Activated CD4-positive, alpha-beta T cell treated with anti-CD3 and anti-CD28 coated beads for 36 hours (primary cell): ENCODE measurements at regions of chr1 and their contacts with region 1.

Region 1: DNA sequence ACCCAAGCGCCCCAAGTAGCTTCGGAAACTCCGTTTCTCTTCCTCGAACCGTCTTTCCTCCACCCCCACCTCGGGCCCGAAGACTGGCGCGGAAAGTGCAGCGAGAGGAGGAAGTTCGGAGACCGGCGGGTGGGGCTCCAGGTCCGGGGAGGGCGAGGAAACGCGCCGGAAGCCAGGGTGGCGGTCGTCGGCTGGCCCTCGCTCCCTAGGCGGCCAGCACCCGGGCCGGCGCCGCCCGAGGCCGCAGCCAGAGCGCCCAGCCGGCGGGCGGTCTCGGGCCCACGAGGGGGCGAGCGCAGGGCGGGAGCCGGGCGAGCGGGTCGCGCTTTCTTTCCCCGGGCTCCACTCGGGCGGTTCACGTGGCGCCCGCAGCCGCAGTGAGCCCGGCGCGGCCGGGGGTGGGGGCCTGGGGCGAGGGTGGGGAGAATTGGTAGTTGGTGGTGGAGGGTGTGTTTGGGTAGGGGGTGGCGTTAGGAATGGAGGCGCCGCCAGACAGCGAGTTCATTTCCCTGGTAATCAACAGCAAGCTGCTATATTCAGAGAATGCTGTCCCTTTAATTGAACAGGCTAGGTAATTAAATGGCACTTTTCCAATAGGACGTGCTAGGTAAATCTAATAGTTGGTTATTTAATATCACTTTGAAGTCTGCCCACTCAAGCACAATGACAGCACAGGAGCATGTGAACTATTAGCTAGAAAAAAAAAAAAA is 6.7 kb downstream of the LMO4 start:
- DNase-seq: peak; percentile 77
- ATAC-seq: peak; percentile 53
- H3K4me3 Mint-ChIP-seq: peak overlapping the region; percentile 76
- H3K27ac Mint-ChIP-seq: peak overlapping the region; percentile 96
- H3K4me1 Mint-ChIP-seq: peaks cover 60% of the 10 kb centered on the region
- H3K27me3 Mint-ChIP-seq: peaks cover 29% of the 10 kb centered on the region

Region 2: GRCh38 chr1:86380257-86380861 is 955.0 kb before region 1 on chr1:
- CTCF ChIA-PET with region 1: no interaction called
- POLR2A ChIA-PET with region 1: no interaction called
- intact Hi-C with region 1: loop called in 1 of 2 experiments (anchors 10 kb)
- DNase-seq: no peak
- ATAC-seq: peak; percentile 51
- H3K4me3 Mint-ChIP-seq: no peak overlapping the region
- H3K27ac Mint-ChIP-seq: no peak overlapping the region
- H3K4me1 Mint-ChIP-seq: peaks cover 8% of the 10 kb centered on the region
- H3K27me3 Mint-ChIP-seq: no peaks in the 10 kb centered on the region

Region 3: GRCh38 chr1:86933562-86934377 is 401.6 kb before region 1 on chr1:
- CTCF ChIA-PET with region 1: no interaction called
- POLR2A ChIA-PET with region 1: no interaction called
- intact Hi-C with region 1: no loop called
- DNase-seq: no peak
- ATAC-seq: no peak
- H3K4me3 Mint-ChIP-seq: no peak overlapping the region
- H3K27ac Mint-ChIP-seq: peak overlapping the region; percentile 16
- H3K4me1 Mint-ChIP-seq: peaks cover 27% of the 10 kb centered on the region
- H3K27me3 Mint-ChIP-seq: no peaks in the 10 kb centered on the region

Region 4: DNA sequence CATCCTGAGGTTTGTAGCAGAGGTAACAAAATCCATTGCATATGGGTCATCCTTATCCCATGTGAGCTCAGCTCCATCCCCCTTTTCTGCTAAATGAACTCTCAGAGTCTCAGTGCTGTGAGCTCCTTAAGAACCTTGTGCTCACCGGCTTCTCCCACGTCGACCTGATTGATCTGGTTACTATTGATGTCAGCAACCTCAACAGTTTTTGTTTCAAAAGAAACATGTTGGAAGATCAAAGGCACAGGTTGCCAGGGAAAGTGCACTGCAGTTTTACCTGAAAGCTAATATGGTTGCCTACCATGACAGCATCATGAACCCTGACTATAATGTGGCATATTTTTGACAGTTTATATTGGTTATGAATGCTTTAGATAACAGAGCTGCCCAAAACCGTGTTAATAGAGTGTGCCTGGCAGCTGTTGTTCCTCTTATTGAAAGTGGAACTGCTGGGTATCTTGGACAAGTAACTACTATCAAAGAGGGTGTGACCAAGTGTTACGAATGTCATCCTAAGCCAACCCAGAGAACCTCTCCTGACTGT is 289.5 kb before region 1 on chr1:
- CTCF ChIA-PET with region 1: no interaction called
- POLR2A ChIA-PET with region 1: no interaction called
- intact Hi-C with region 1: loop called in 1 of 2 experiments (anchors 5 kb)
- DNase-seq: peak; percentile 80
- ATAC-seq: peak; percentile 81
- H3K4me3 Mint-ChIP-seq: peak overlapping the region; percentile 57
- H3K27ac Mint-ChIP-seq: peak overlapping the region; percentile 94
- H3K4me1 Mint-ChIP-seq: peaks cover 58% of the 10 kb centered on the region
- H3K27me3 Mint-ChIP-seq: no peaks in the 10 kb centered on the region

Region 5: DNA sequence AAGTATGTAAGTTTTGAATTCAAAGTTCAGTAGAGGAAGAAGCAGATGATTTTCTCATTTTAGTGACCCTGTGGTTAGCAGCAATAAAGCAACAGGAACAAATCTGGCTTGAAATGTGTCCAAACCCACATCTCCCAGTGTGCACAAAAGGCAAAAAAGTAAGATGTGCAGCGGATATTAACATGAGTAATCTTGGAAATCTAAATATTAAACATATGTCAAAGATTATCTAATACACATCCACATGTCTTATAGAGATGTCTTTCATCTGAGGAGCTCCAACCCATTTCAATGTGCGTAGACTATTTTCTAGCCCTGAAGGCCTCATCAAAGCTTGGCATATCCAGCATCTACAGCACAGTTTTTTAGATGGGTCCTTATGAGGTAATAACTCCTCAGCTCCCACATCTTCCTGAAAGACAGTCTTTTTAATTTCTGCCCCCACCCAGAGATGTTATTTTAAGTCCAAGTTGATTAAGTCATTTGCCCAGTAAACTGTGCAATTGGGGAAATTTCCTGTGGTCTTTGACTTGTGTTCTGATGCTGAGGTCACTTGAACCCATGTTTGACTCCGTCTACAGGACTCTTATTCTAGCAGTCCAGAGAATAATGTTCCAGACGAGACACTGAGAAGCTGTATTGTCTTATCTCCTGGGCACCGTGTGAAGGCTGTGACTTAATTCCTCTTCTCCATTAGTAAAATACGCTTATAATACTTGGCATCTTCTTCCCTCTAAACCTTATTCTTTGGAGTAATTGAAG is 67.1 kb after region 1 on chr1:
- CTCF ChIA-PET with region 1: interaction called, 5 read pairs
- POLR2A ChIA-PET with region 1: interaction called, 4 read pairs
- intact Hi-C with region 1: loop called (anchors 1 kb)
- DNase-seq: no peak
- ATAC-seq: no peak
- H3K4me3 Mint-ChIP-seq: no peak overlapping the region
- H3K27ac Mint-ChIP-seq: no peak overlapping the region
- H3K4me1 Mint-ChIP-seq: peaks cover 17% of the 10 kb centered on the region
- H3K27me3 Mint-ChIP-seq: peaks cover 17% of the 10 kb centered on the region

Region 6: GRCh38 chr1:88891318-88891950 is 1556.1 kb after region 1 on chr1 and contains the start of gene GTF2B:
- CTCF ChIA-PET with region 1: no interaction called
- POLR2A ChIA-PET with region 1: no interaction called
- intact Hi-C with region 1: loop called in 1 of 2 experiments (anchors 2 kb)
- DNase-seq: peak; percentile 96
- ATAC-seq: peak; percentile 87
- H3K4me3 Mint-ChIP-seq: peak within 1 kb of the TSS; percentile 88
- H3K27ac Mint-ChIP-seq: peak within 1 kb of the TSS; percentile 96
- H3K4me1 Mint-ChIP-seq: peaks cover 34% of the 10 kb centered on the region
- H3K27me3 Mint-ChIP-seq: no peaks in the 10 kb centered on the region
- total RNA-seq, gene GTF2B: 34.3 to 38.1 TPM